PC-9 (cell line): ENCODE measurements at regions of chr4 and their contacts with region 1.

Region 1: DNA sequence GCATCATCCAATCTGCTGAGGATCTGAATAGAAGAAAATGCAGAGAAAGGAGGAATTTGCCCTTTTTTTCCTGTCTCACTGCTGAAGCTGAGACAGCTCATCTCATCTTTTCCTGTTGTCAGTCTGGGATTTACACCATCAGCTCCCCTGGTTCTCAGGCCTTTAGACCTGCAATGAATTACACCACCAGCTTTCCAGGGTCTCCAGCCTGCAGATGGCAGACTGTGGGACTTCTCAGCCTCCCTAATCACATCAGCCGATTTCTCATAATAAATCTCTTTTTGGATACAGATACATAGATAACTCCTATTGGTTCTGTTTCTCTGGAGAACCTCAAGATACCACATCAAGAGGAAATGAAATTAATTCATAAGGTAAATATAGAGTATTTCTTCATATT is 134.6 kb upstream of the MAB21L2 start:
- DNase-seq: no peak
- H3K4me3 ChIP-seq: no peak overlapping the region
- H3K27ac ChIP-seq: no peak overlapping the region
- H3K4me1 ChIP-seq: no peaks in the 10 kb centered on the region
- H3K27me3 ChIP-seq: no peaks in the 10 kb centered on the region
- CTCF ChIP-seq: no peak

Region 2: GRCh38 chr4:150501009-150501727 is 53.8 kb after region 1 on chr4:
- CTCF ChIA-PET with region 1: no interaction called
- POLR2A ChIA-PET with region 1: no interaction called
- intact Hi-C with region 1: no loop called
- DNase-seq: no peak
- H3K4me3 ChIP-seq: no peak overlapping the region
- H3K27ac ChIP-seq: no peak overlapping the region
- H3K4me1 ChIP-seq: no peaks in the 10 kb centered on the region
- H3K27me3 ChIP-seq: no peaks in the 10 kb centered on the region
- CTCF ChIP-seq: no peak

Region 3: DNA sequence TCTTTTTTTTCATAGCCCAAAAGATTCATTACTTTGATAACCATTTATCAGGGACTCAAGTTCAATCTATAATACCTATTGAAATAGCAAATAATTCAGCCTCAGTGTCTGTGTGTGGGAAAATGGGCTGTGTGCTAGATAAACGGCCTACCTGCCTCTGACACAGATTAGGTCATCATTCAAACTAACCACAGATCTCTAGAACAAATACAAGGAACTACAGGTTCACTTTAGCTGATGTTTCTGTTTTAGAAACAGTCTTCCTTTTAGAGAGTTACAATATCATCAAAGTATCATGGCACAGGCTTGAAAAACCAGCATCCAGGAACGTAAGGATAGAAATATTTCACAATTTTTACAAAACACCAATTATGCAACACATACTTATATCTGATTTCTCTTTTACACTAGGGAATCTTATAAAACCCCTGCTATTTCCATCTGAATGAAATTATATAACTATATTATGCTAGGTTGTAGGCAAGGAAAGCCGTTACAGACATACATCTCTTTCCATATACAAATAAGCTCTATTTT is 78.0 kb after region 1 on chr4:
- CTCF ChIA-PET with region 1: no interaction called
- POLR2A ChIA-PET with region 1: no interaction called
- intact Hi-C with region 1: no loop called
- DNase-seq: peak in 1 of 2 experiments; percentile 52
- H3K4me3 ChIP-seq: no peak overlapping the region
- H3K27ac ChIP-seq: peak overlapping the region; percentile 23; the same call in 1 of the 2 replicates
- H3K4me1 ChIP-seq: peaks cover 13% of the 10 kb centered on the region; the same call in 1 of the 2 replicates
- H3K27me3 ChIP-seq: no peaks in the 10 kb centered on the region
- CTCF ChIP-seq: no peak

Region 4: GRCh38 chr4:150679018-150679764 is 231.8 kb after region 1 on chr4:
- CTCF ChIA-PET with region 1: no interaction called
- POLR2A ChIA-PET with region 1: interaction called, 10 read pairs
- intact Hi-C with region 1: no loop called
- DNase-seq: no peak
- H3K4me3 ChIP-seq: no peak overlapping the region
- H3K27ac ChIP-seq: no peak overlapping the region
- H3K4me1 ChIP-seq: no peaks in the 10 kb centered on the region
- H3K27me3 ChIP-seq: no peaks in the 10 kb centered on the region
- CTCF ChIP-seq: no peak

Region 5: GRCh38 chr4:152278505-152279233 is 1831.3 kb after region 1 on chr4:
- CTCF ChIA-PET with region 1: no interaction called
- POLR2A ChIA-PET with region 1: no interaction called
- intact Hi-C with region 1: no loop called
- DNase-seq: no peak
- H3K4me3 ChIP-seq: no peak overlapping the region
- H3K27ac ChIP-seq: no peak overlapping the region
- H3K4me1 ChIP-seq: no peaks in the 10 kb centered on the region
- H3K27me3 ChIP-seq: no peaks in the 10 kb centered on the region
- CTCF ChIP-seq: no peak